Mammary epithelial cell (primary cell): ENCODE measurements at regions of chr3 and their contacts with region 1.

Region 1: DNA sequence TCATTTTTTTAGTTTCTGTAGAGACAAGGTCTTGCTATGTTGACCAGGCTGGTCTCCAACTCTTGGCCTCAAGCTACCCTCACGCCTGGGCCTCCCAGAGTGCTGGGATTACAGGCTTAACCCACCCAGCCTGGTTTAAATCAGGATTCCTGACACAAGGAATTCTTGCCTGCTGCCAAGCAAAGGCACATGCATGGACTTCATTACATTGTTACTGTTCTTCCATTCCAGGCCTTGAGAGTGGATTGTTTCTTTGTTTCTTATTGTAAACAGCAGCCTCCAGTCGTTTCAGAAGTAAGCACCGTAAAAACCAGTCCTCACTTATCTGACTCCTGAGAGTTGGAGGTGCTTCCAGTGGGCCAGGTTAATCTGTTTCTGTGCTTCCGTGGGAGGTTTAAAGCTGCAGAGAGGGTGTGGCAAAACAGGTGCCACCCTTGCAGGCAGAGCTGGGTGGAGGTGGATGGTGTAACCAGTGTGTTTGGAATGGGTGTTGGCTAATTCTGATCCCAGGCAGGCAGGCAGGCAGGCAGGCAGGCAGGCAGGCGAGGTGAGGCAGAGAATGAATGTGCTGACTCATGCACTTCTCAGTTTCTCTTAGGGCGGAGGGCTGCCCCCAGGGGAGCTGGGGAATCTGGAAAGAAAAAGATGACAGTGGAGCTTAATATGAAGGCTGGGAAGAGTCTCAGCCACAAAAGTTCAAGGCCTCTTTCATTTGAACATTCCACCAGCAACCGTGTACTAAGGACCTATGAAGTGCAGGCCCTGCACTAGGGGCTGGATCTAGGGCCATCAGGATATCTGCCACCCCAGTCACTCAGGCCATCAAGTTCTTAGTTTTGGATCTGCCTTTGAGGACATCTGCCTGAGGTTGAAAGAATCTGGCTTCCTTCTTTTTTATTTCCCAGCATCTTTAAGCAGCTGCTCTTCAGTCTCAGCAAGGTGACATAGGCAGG is 37.0 kb upstream of the CDCP1 start:
- DNase-seq: peak; percentile 95
- H3K4me3 ChIP-seq: no peak overlapping the region
- H3K27ac ChIP-seq: peak overlapping the region; percentile 61
- H3K4me1 ChIP-seq: peaks cover 40% of the 10 kb centered on the region
- H3K27me3 ChIP-seq: no peaks in the 10 kb centered on the region
- CTCF ChIP-seq: no peak

Region 2: GRCh38 chr3:45167011-45167911 is 15.9 kb before region 1 on chr3:
- CTCF ChIA-PET with region 1: no interaction called
- dilution Hi-C with region 1: no loop called
- in situ Hi-C with region 1: no loop called
- intact Hi-C with region 1: loop called (anchors 2 kb)
- DNase-seq: peak; percentile 98
- H3K4me3 ChIP-seq: no peak overlapping the region
- H3K27ac ChIP-seq: peak overlapping the region; percentile 96
- H3K4me1 ChIP-seq: peaks cover 25% of the 10 kb centered on the region
- H3K27me3 ChIP-seq: no peaks in the 10 kb centered on the region
- CTCF ChIP-seq: no peak

Region 3: GRCh38 chr3:45224824-45225464 is 41.8 kb after region 1 on chr3:
- CTCF ChIA-PET with region 1: no interaction called
- dilution Hi-C with region 1: no loop called
- in situ Hi-C with region 1: no loop called
- intact Hi-C with region 1: no loop called
- DNase-seq: peak; percentile 55
- H3K4me3 ChIP-seq: peak overlapping the region; percentile 37 to 69 (median 58)
- H3K27ac ChIP-seq: no peak overlapping the region
- H3K4me1 ChIP-seq: peaks cover 12% of the 10 kb centered on the region
- H3K27me3 ChIP-seq: no peaks in the 10 kb centered on the region
- CTCF ChIP-seq: peak; percentile 36 to 61